AG04450 (cell line): ENCODE measurements at regions of chr1 and their contacts with region 1.

Region 1: GRCh38 chr1:200802865-200803512 is 64.3 kb downstream of the CAMSAP2 start:
- DNase-seq: peak; percentile 61
- H3K4me3 ChIP-seq: no peak overlapping the region
- H3K27ac ChIP-seq: no peak overlapping the region
- H3K27me3 ChIP-seq: no peaks in the 10 kb centered on the region
- CTCF ChIP-seq: peak; percentile 97

Region 2: DNA sequence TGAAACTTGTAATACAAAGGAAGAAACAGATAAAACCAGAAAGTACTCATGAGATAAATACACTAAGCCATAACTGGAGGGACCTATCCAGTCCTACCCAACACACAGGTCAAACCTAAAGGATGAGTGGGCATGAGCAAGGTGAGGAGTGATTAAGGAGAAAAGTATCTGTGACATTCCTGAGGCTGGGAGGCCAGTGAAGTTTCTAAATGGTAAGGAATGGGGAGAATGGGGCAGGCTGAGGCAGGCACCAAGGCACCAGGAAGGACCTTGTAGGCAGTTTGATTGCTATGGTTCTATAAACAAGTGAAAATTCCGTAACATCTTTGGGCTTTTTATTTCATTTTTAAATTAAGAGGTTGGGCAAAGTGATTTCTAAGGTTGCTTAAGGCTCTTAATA is 143.7 kb before region 1 on chr1:
- CTCF ChIA-PET with region 1: interaction called, 11 read pairs
- POLR2A ChIA-PET with region 1: no interaction called
- DNase-seq: peak; percentile 2
- H3K4me3 ChIP-seq: no peak overlapping the region
- H3K27ac ChIP-seq: no peak overlapping the region
- H3K27me3 ChIP-seq: no peaks in the 10 kb centered on the region
- CTCF ChIP-seq: no peak

Region 3: GRCh38 chr1:200774735-200775444 is 28.1 kb before region 1 on chr1:
- CTCF ChIA-PET with region 1: interaction called, 34 read pairs
- POLR2A ChIA-PET with region 1: no interaction called
- DNase-seq: no peak
- H3K4me3 ChIP-seq: no peak overlapping the region
- H3K27ac ChIP-seq: no peak overlapping the region
- H3K27me3 ChIP-seq: no peaks in the 10 kb centered on the region
- CTCF ChIP-seq: no peak

Region 4: DNA sequence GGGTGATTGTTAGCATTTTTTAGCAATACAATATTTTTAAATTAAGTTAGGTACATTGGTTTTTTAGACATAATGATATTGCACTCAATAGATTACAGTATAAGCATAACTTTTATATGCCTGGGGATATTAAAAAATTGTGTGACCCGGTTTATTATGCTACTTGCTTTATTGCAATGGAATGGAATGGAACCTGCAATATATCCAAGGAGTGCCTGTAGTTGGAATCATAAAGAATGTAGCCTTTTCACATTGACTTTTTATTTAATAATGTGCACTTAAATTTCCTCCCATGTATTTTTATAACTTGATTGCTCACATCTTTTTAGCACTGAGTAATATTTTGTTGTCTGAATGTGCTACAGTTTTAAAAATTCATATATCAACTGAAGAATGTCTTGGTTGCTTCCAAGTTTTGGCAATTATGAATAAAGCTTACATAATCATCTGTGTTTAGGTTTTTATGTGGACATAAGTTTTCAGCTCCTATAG is 15.0 kb before region 1 on chr1:
- CTCF ChIA-PET with region 1: interaction called, 43 read pairs
- POLR2A ChIA-PET with region 1: no interaction called
- DNase-seq: no peak
- H3K4me3 ChIP-seq: no peak overlapping the region
- H3K27ac ChIP-seq: no peak overlapping the region
- H3K27me3 ChIP-seq: no peaks in the 10 kb centered on the region
- CTCF ChIP-seq: no peak